ENCODE measurements at regions of chr11 and their contacts with region 1.

Region 1: DNA sequence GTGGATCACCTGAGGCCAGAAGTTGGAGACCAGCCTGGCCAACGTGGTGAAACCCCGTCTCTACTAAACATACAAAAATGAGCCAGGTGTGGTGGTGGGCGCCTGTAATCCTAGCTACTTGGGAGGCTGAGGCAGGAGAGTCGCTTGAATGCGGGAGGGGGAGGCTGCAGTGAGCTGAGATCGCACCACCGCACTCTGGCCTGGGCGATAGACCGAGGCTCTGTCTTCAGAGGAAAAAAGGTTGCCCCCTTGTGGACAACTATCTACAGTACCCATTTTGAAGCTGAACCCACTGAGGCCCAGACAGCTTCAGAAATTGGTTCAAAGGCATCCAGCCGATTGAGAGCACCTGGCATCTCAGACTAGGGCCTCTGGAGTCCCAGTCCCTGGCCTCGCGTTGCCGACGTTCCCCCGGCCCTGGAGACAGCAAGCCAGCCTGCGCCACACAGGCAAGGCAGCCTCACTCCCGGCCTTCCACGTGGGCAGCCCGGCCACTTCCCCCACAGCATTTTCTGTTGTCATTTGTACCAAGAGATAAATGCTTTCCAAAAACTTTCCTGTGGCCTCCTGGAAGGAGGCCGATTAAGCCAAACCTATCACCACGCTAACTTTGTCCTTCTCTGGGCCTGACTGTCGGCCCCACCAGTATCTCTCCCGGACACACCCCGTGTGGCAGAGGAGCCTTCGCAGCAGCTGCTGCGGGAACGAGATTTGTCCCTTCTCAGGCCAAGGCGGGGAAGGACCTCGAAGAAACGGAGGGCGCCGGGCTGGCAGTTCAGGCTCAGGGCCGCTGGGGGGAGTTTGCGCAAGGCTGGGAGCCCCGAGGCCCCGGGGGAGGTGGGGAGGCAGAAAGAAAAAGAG is 82.8 kb downstream of the FLI1 start:
- DNase-seq: no peak
- H3K4me3 ChIP-seq: no peak overlapping the region
- H3K27ac ChIP-seq: no peak overlapping the region
- H3K4me1 ChIP-seq: no peaks in the 10 kb centered on the region
- H3K27me3 ChIP-seq: peaks cover 0 to 7% of the 10 kb centered on the region in 2 donors
- CTCF ChIP-seq: no peak
- POLR2A ChIP-seq: no peak

Region 2: GRCh38 chr11:127902382-127902781 is 874.3 kb before region 1 on chr11:
- intact Hi-C with region 1: loop called (anchors 5 kb)
- DNase-seq: no peak
- H3K4me3 ChIP-seq: no peak overlapping the region
- H3K27ac ChIP-seq: no peak overlapping the region
- H3K4me1 ChIP-seq: no peaks in the 10 kb centered on the region
- H3K27me3 ChIP-seq: no peaks in the 10 kb centered on the region
- CTCF ChIP-seq: no peak
- POLR2A ChIP-seq: no peak

Measured in breast epithelium (tissue), 4 donors.